AG04449 (cell line): ENCODE measurements at regions of chr16 and their contacts with region 1.

Region 1: GRCh38 chr16:9033125-9033830 is 58.2 kb upstream of the HAPSTR1 start:
- DNase-seq: no peak
- H3K4me3 ChIP-seq: no peak overlapping the region
- CTCF ChIP-seq: peak; percentile 62

Region 2: DNA sequence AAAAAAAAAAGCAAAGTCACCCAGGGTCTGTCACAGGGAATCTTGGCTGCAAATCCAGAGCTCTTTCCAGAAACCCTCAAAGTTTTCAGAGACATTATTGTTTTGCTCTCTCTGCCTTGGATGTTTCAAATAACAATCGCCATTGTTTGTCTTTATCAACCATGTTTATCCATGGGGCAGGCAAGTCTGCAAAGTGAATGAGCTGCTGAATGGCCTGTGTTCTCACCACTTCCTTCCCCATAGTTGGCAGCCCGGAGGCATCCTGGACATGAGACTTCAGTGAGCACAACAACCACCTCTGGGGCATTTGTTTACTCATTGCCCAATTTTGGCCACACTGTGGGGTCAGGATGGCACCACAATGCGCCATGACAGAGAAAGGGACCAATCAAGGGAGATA is 16.5 kb before region 1 on chr16:
- CTCF ChIA-PET with region 1: interaction called, 26 read pairs
- POLR2A ChIA-PET with region 1: no interaction called
- DNase-seq: no peak
- H3K4me3 ChIP-seq: no peak overlapping the region
- CTCF ChIP-seq: no peak

Region 3: GRCh38 chr16:9047686-9048301 is 14.5 kb after region 1 on chr16:
- CTCF ChIA-PET with region 1: interaction called, 36 read pairs
- POLR2A ChIA-PET with region 1: no interaction called
- DNase-seq: peak; percentile 96
- H3K4me3 ChIP-seq: no peak overlapping the region
- CTCF ChIP-seq: no peak